SK-N-SH (cell line): ENCODE measurements at regions of chr17 and their contacts with region 1.

Region 1: DNA sequence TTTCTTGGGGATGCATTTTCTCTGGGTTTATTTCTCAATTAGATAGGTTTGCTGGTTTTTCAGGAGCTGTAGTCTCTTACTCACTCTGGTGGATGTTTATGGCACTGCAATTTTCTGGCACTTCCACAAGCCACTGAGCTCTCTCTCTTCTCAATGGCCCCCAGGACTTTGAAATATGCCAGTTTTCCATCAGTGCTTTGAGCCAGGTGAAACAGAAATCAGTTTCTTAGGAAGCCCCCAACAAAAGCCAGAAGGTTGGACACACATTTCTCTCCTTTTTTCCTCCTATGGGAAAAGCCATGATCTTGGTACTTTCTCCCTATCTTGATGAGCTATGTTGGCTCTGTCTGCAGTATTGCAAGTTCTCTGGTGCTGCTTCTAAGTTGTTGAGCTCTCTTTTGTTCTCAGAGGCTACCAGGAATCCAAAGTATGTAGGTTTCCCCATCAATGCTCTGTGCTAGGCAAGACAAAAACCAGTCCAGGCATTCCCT is 90.7 kb upstream of the SMIM36 start:
- DNase-seq: peak; percentile 52
- H3K4me3 ChIP-seq: no peak overlapping the region
- H3K27ac ChIP-seq: no peak overlapping the region
- H3K4me1 ChIP-seq: no peaks in the 10 kb centered on the region
- H3K27me3 ChIP-seq: no peaks in the 10 kb centered on the region
- CTCF ChIP-seq: peak; percentile 83
- EP300 ChIP-seq: no peak
- RAD21 ChIP-seq: peak; percentile 92

Region 2: DNA sequence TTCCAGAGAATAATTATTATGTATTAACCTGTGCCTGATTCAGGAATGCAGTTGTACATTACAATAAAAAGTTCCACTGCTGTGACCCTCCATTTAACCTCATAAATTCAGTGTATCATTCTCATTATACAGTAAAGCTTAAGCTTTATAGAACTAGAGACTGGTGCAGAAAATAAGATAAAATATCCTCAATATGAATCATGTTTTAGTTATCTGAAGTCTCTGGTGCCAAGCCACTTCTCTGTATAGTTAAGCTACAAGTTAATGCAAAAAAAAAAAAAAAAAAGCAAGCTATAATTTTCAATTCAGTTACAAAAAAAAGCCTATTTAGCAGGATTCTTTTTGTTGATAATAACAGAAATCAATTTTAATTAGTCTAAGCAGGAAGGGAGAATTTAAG is 68.3 kb before region 1 on chr17:
- CTCF ChIA-PET with region 1: interaction called, 85 read pairs
- POLR2A ChIA-PET with region 1: no interaction called
- DNase-seq: no peak
- H3K4me3 ChIP-seq: no peak overlapping the region
- H3K27ac ChIP-seq: peak overlapping the region in 1 of 2 experiments; percentile 26; a peak in 2 of 4 replicates
- H3K4me1 ChIP-seq: peaks cover 0 to 13% of the 10 kb centered on the region in 2 experiments; a peak in 2 of 4 replicates
- H3K27me3 ChIP-seq: no peaks in the 10 kb centered on the region
- CTCF ChIP-seq: no peak
- EP300 ChIP-seq: no peak
- RAD21 ChIP-seq: no peak

Region 3: GRCh38 chr17:55555772-55556171 is 46.1 kb before region 1 on chr17:
- CTCF ChIA-PET with region 1: interaction called, 10 read pairs
- POLR2A ChIA-PET with region 1: no interaction called
- DNase-seq: no peak
- H3K4me3 ChIP-seq: no peak overlapping the region
- H3K27ac ChIP-seq: no peak overlapping the region
- H3K4me1 ChIP-seq: no peaks in the 10 kb centered on the region
- H3K27me3 ChIP-seq: no peaks in the 10 kb centered on the region; the same call in 1 of the 2 replicates
- CTCF ChIP-seq: no peak
- EP300 ChIP-seq: no peak
- RAD21 ChIP-seq: no peak

Region 4: DNA sequence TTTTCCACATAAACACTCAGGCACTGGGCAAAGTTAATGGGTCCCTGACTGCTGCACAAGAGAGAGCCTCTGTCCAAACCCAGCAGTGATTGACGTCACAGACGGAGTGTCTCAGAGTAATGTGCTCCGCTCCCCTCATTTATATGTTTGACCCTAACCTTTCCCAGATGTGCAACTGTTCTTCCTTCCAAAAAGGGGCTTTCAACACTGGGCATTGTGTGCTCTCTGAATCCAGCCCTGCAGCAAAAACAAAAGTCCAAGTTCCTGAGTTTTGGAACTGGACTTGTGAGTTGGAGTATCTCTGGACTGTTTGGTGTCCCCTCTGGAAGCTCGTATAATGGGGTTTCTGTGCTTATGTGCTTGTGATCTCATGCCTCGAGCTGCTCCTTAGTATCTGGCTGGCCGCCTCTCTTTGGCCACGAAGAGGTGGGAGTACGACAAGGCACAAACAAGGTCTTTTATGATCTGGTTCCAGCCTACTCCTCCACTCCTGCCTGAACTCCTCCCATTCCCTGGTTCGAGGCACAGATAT is 14.2 kb before region 1 on chr17:
- CTCF ChIA-PET with region 1: interaction called, 32 read pairs
- POLR2A ChIA-PET with region 1: no interaction called
- DNase-seq: no peak
- H3K4me3 ChIP-seq: no peak overlapping the region
- H3K27ac ChIP-seq: no peak overlapping the region
- H3K4me1 ChIP-seq: peaks cover 2 to 17% of the 10 kb centered on the region in 2 experiments; a peak in 2 of 4 replicates
- H3K27me3 ChIP-seq: no peaks in the 10 kb centered on the region
- CTCF ChIP-seq: no peak
- EP300 ChIP-seq: no peak
- RAD21 ChIP-seq: no peak

Region 5: GRCh38 chr17:55617441-55617840 is 15.5 kb after region 1 on chr17:
- CTCF ChIA-PET with region 1: interaction called, 26 read pairs
- POLR2A ChIA-PET with region 1: no interaction called
- DNase-seq: no peak
- H3K4me3 ChIP-seq: no peak overlapping the region
- H3K27ac ChIP-seq: no peak overlapping the region
- H3K4me1 ChIP-seq: peaks cover 0 to 10% of the 10 kb centered on the region in 2 experiments; a peak in 2 of 4 replicates
- H3K27me3 ChIP-seq: no peaks in the 10 kb centered on the region
- CTCF ChIP-seq: no peak
- EP300 ChIP-seq: no peak
- RAD21 ChIP-seq: no peak

Region 6: DNA sequence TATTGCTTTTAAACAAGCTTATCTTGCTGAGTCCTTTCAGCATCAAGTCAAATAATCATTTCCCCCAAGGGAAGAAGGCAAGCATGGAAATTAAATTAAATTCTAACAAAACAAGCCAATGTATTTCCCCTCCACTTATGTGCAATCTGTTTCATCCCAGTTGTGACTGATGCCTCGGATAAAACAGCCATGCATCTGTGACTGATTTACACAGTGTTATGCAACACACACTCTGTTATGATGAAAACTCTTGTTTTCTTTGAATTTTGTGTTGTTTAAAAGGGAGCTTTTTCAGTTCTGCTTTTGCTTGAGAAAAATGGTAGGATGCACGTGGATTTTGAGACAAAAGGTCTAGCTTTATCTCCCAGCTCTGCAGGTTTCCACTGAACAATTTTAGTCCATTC is 88.2 kb after region 1 on chr17:
- CTCF ChIA-PET with region 1: interaction called, 11 read pairs
- POLR2A ChIA-PET with region 1: no interaction called
- DNase-seq: peak; percentile 58
- H3K4me3 ChIP-seq: no peak overlapping the region
- H3K27ac ChIP-seq: peak overlapping the region in 1 of 2 experiments; percentile 99; a peak in 2 of 4 replicates
- H3K4me1 ChIP-seq: peaks cover 0 to 54% of the 10 kb centered on the region in 2 experiments; a peak in 3 of 4 replicates
- H3K27me3 ChIP-seq: no peaks in the 10 kb centered on the region
- CTCF ChIP-seq: no peak
- EP300 ChIP-seq: peak; percentile 22 to 99; a peak in 2 of 4 replicates
- RAD21 ChIP-seq: peak; percentile 38

Region 7: GRCh38 chr17:55735731-55736405 is 133.9 kb after region 1 on chr17:
- CTCF ChIA-PET with region 1: interaction called, 12 read pairs
- POLR2A ChIA-PET with region 1: no interaction called
- DNase-seq: peak; percentile 52
- H3K4me3 ChIP-seq: no peak overlapping the region; a peak in 1 of 4 replicates
- H3K27ac ChIP-seq: no peak overlapping the region
- H3K4me1 ChIP-seq: peaks cover 14 to 39% of the 10 kb centered on the region in 2 experiments
- H3K27me3 ChIP-seq: no peaks in the 10 kb centered on the region
- CTCF ChIP-seq: peak; percentile 89
- EP300 ChIP-seq: no peak
- RAD21 ChIP-seq: peak; percentile 77